Activated CD4-positive, alpha-beta memory T cell treated with anti-CD3 and anti-CD28 coated beads for 36 hours (primary cell): ENCODE measurements at regions of chr1 and their contacts with region 1.

Region 1: DNA sequence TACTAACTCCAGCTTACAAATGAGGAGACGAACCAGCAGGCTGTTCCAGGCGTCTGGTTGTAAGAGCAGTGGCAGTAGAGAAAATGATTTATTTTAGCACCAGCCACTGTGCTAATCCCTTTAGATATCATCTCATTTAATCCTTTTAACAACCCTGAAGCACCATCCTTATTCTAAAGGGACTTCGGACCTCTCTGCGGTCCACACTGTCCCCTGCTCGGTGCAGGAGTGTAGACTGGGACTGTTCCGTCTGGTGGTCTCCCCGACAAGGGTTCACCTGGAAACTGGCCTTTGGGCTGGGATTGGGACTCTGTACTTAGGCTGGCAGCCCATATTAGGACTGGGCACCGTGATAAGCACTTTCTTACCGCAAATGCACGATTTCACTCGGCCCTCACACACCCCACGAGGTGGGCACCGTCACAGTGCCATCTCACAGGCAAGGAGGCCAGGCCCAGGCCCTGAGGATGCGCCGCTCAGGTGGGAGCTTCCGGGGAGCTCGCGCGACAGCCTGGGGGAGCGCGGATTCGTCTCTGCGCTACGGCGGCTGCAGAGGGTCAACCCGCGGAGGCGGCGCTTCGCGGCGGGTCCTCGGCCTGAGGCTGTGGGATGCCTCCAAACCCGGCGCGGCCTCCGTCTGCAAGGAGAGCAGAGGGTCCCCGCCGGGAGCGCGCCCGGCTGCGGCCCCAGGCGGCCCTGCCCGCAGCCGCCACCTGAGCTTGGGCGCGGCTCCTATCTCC is 45.2 kb downstream of the ATP1A1 start:
- DNase-seq: peak; percentile 91
- H3K4me3 Mint-ChIP-seq: peak overlapping the region; percentile 87
- H3K27ac Mint-ChIP-seq: peak overlapping the region; percentile 75
- H3K4me1 Mint-ChIP-seq: peaks cover 32% of the 10 kb centered on the region
- H3K27me3 Mint-ChIP-seq: no peaks in the 10 kb centered on the region

Region 2: GRCh38 chr1:116168277-116169097 is 249.8 kb before region 1 on chr1:
- CTCF ChIA-PET with region 1: interaction called, 3 read pairs
- POLR2A ChIA-PET with region 1: no interaction called
- intact Hi-C with region 1: loop called (anchors 5 kb)
- DNase-seq: peak; percentile 88
- H3K4me3 Mint-ChIP-seq: peak overlapping the region; percentile 72
- H3K27ac Mint-ChIP-seq: no peak overlapping the region
- H3K4me1 Mint-ChIP-seq: peaks cover 12% of the 10 kb centered on the region
- H3K27me3 Mint-ChIP-seq: no peaks in the 10 kb centered on the region

Region 3: GRCh38 chr1:116372587-116373444 is 45.4 kb before region 1 on chr1 and contains the start of gene ATP1A1:
- CTCF ChIA-PET with region 1: interaction called, 3 read pairs
- POLR2A ChIA-PET with region 1: interaction called, 13 read pairs
- intact Hi-C with region 1: loop called (anchors 1 kb)
- DNase-seq: peak; percentile 98
- H3K4me3 Mint-ChIP-seq: peak within 1 kb of the TSS; percentile 88
- H3K27ac Mint-ChIP-seq: peak within 1 kb of the TSS; percentile 97
- H3K4me1 Mint-ChIP-seq: peaks cover 38% of the 10 kb centered on the region
- H3K27me3 Mint-ChIP-seq: peaks cover 3% of the 10 kb centered on the region
- total RNA-seq, gene ATP1A1: 253 to 258 TPM

Region 4: DNA sequence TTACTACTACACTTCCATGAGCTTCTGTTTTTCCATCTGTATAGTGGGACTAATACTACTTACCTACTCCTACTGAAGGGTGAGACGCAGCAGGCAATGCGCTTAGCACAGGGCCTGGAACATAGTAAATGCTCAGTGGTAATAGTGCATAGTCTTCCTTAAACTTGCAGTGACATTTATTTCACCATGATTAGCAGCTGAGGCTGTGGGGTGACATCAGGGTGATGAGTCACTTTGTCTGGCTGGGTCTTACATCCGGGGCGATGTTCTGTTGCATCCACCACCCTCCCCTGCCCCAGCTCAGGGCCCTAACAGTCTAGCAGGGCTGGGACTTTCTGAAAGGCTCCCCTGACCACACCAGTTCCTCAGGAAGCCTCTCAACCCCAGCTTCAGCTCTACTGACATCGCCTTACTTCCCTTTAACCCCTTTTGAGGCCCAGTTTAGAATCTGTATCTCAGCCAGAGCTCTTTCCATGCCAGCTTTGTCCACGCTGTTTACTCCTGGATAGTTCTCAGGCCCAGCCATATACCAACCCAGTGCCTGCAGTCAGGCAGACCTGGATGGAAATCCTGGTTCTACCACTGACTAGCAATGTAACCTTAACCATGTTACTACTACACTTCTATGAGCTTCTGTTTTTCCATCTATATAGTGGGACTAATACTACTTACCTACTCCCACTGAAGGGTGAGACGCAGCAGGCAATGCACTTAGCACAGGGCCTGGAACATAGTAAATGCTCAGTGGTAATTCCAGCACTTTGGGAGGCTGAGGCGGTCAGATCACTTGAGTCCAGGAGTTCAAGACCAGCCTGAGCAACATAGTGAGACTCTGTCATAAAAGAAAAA is 86.3 kb after region 1 on chr1:
- CTCF ChIA-PET with region 1: interaction called, 8 read pairs
- POLR2A ChIA-PET with region 1: no interaction called
- intact Hi-C with region 1: loop called (anchors 1 kb)
- DNase-seq: peak; percentile 92
- H3K4me3 Mint-ChIP-seq: peak overlapping the region; percentile 38
- H3K27ac Mint-ChIP-seq: peak overlapping the region; percentile 97
- H3K4me1 Mint-ChIP-seq: peaks cover 65% of the 10 kb centered on the region
- H3K27me3 Mint-ChIP-seq: no peaks in the 10 kb centered on the region